Thyroid gland (tissue), 4 donors: ENCODE measurements at regions of chr15 and their contacts with region 1.

Region 1: DNA sequence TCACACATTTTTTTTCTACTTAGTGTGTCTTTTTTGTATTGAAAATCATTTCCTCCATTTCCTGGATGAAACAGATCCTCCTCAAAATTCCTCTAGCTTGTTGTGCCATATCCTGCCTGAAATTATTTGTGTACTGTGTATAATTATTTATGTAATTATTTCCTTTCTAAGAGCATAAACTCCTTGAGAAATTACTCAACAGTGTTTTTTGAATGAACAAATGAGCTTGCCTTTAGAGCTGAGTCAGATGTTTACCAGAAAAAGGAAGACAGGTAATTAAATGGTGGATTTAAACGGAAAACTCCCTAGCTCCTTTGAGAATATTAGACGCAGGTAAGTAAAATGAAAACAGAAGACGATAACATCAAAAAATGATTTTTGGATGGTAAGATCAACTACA is 13.2 kb upstream of the SECISBP2L start:
- DNase-seq: no peak
- H3K4me3 ChIP-seq: no peak overlapping the region
- H3K27ac ChIP-seq: no peak overlapping the region
- H3K4me1 ChIP-seq: no peaks in the 10 kb centered on the region
- H3K27me3 ChIP-seq: no peaks in the 10 kb centered on the region
- CTCF ChIP-seq: no peak
- POLR2A ChIP-seq: no peak

Region 2: GRCh38 chr15:48896869-48897814 is 162.3 kb before region 1 on chr15:
- intact Hi-C with region 1: no loop called
- DNase-seq: no peak
- H3K4me3 ChIP-seq: no peak overlapping the region
- H3K27ac ChIP-seq: no peak overlapping the region
- H3K4me1 ChIP-seq: no peaks in the 10 kb centered on the region
- H3K27me3 ChIP-seq: no peaks in the 10 kb centered on the region
- CTCF ChIP-seq: no peak
- POLR2A ChIP-seq: no peak

Region 3: DNA sequence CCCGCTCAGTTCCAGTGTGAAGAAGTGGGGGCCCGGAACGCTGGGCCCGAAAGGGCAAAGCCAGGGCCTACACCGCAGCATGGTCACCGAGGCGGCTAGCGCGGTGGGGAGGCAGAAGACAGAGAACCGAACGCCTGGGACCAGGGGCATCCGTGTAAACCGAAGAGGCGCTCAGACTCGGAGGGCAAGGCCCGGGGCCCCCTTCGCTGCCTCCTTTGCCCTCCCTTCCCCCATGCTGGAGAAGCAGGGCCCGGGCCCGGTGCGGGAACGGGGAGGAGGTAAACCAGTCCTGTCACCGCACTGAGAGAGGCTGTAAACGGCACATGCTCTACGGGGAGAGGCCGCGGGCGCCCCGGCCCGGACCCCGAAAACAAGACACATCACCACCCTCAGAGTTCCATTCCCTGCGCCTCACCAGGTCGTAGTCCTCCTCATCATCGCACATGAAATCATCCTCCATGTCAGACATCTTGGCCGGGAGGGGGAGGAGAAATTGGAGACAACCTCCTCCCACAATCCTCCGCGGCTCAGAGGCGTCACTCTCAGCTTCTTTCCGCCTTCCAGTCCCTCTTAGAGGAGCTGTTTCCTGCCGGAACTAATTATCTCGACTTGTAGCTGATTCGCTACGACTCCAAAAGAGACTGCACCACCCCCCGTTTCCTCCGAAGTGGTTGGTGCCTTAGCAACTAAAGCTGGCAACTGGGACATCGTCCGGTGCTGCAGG is 95.8 kb after region 1 on chr15 and contains the start of gene COPS2:
- intact Hi-C with region 1: loop called (anchors 10 kb)
- DNase-seq: peak; percentile 94
- H3K4me3 ChIP-seq: peak within 1 kb of the TSS; percentile 41 to 84 (median 78)
- H3K27ac ChIP-seq: peak within 1 kb of the TSS; percentile 4 to 90 (median 80)
- H3K4me1 ChIP-seq: peaks cover 14 to 16% of the 10 kb centered on the region in 2 donors
- H3K27me3 ChIP-seq: no peaks in the 10 kb centered on the region
- CTCF ChIP-seq: peak in 1 of 6 experiments; percentile 27
- POLR2A ChIP-seq: peak in 1 of 2 donors; percentile 75
- total RNA-seq, gene COPS2: 52.4 to 80.0 (median 61.3) TPM